Dendritic cell treated with granulocyte-macrophage colony-stimulating factor and Interleukin-4, amounts not matched to agents 40 ng/mL and 50 ng/mL, for 4 days (primary cell): ENCODE measurements at regions of chr10 and their contacts with region 1.

Region 1: DNA sequence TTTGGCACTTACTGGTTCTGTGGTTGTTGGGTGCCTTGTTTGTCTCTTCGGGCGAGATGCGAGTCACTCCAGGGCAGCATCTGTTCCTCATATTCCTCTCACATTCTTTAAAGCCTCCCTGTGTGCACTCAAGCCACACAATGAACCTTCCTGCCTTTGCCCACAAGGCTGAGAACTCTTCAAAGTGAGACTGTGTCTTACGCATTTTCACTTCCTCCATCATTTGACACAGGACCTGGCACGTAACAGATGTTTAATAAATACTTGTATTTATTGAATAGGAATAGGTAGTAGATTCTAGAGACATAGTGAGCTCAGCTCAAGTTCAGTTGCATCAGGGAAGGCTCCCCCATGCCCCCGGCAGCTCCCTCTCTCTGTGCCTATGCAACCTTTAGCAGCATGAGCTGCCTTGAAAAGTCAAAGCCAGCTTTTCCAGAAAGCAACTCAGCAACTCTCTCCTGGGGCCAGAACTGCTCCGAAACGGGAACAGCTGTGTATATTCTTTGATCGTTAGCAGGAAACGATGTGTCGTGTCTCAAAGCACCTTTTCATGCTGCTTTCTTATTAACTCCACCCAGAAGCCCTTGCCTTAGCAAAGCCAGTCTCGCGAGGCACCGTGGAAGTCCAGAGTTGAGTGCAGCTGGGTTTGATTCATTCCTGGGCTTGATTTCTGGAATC is 97.5 kb downstream of the PFKFB3 start:
- H3K4me3 Mint-ChIP-seq: peak overlapping the region; percentile 7
- H3K27ac Mint-ChIP-seq: peak overlapping the region; percentile 73
- H3K4me1 Mint-ChIP-seq: peaks cover 52% of the 10 kb centered on the region
- H3K27me3 Mint-ChIP-seq: peaks cover 8% of the 10 kb centered on the region

Region 2: GRCh38 chr10:6275022-6275997 is 24.9 kb before region 1 on chr10:
- intact Hi-C with region 1: loop called (anchors 1 kb)
- H3K4me3 Mint-ChIP-seq: peak overlapping the region; percentile 65
- H3K27ac Mint-ChIP-seq: peak overlapping the region; percentile 96
- H3K4me1 Mint-ChIP-seq: peaks cover 36% of the 10 kb centered on the region
- H3K27me3 Mint-ChIP-seq: peaks cover 16% of the 10 kb centered on the region